Calu3 (cell line): ENCODE measurements at regions of chr14 and their contacts with region 1.

Region 1: GRCh38 chr14:31229638-31230229 is 22.1 kb upstream of the HECTD1 start:
- DNase-seq: peak; percentile 81
- H3K4me3 Mint-ChIP-seq: peak overlapping the region; percentile 14
- H3K27ac Mint-ChIP-seq: peak overlapping the region; percentile 91
- H3K4me1 Mint-ChIP-seq: peaks cover 17% of the 10 kb centered on the region
- H3K27me3 Mint-ChIP-seq: no peaks in the 10 kb centered on the region
- CTCF ChIP-seq: no peak

Region 2: GRCh38 chr14:31263485-31264133 is 33.9 kb after region 1 on chr14:
- CTCF ChIA-PET with region 1: interaction called, 16 read pairs
- intact Hi-C with region 1: loop called (anchors 1 kb)
- DNase-seq: peak; percentile 83
- H3K4me3 Mint-ChIP-seq: peak overlapping the region; percentile 2
- H3K27ac Mint-ChIP-seq: peak overlapping the region; percentile 83
- H3K4me1 Mint-ChIP-seq: peaks cover 34% of the 10 kb centered on the region
- H3K27me3 Mint-ChIP-seq: no peaks in the 10 kb centered on the region
- CTCF ChIP-seq: no peak